B cell (primary cell): ENCODE measurements at regions of chr9 and their contacts with region 1.

Region 1: GRCh38 chr9:128067876-128068613 is at the start of gene SLC25A25:
- DNase-seq: peak; percentile 100
- ATAC-seq: peak; percentile 82
- H3K4me3 ChIP-seq: peak within 1 kb of the TSS; percentile 74 to 100 (median 98)
- H3K4me3 Mint-ChIP-seq: no peak within 1 kb of the TSS
- H3K27ac ChIP-seq: peak within 1 kb of the TSS; percentile 82 to 95
- H3K27ac Mint-ChIP-seq: peak within 1 kb of the TSS; percentile 88
- H3K4me1 ChIP-seq: peaks cover 59 to 74% of the 10 kb centered on the region in 2 donors
- H3K4me1 Mint-ChIP-seq: peaks cover 58% of the 10 kb centered on the region
- H3K27me3 ChIP-seq: no peaks in the 10 kb centered on the region
- H3K27me3 Mint-ChIP-seq: no peaks in the 10 kb centered on the region
- CTCF ChIP-seq: no peak
- total RNA-seq, gene SLC25A25: 12.1 and 12.4 TPM in 2 replicates

Region 2: DNA sequence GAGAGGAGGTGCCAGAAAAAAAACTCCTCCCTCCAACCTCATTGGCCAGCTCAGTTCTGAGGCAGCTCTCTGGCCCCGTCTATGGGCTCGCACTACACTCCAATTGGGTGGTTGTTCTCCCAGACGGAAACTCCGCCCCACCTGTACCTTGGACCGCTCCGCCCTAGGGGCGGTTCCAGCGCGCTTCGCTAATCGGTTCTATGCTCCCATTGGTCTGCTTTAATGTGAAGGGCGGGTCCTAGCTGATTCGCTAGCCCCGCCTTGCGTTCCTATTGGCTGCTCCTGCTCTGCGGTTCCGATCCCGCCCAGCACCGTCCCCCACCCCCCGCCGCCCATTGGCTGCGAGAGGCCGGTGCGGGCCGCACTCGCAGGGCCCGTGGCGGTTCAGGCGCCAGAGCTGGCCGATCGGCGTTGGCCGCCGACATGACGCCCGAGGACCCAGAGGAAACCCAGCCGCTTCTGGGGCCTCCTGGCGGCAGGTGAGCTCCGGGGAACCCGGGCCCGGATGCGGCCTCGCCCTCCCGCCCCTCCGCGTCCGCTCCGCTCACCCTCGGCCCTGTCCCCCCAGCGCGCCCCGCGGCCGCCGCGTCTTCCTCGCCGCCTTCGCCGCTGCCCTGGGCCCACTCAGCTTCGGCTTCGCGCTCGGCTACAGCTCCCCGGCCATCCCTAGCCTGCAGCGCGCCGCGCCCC is 671.1 kb before region 1 on chr9 and contains the start of gene SLC2A8:
- CTCF ChIA-PET with region 1: no interaction called
- POLR2A ChIA-PET with region 1: no interaction called
- intact Hi-C with region 1: loop called (anchors 2 kb)
- DNase-seq: peak; percentile 100
- ATAC-seq: peak; percentile 91
- H3K4me3 ChIP-seq: peak within 1 kb of the TSS; percentile 26 to 77 (median 57)
- H3K4me3 Mint-ChIP-seq: peak within 1 kb of the TSS; percentile 86
- H3K27ac ChIP-seq: peak within 1 kb of the TSS in 1 of 2 donors; percentile 74
- H3K27ac Mint-ChIP-seq: peak within 1 kb of the TSS; percentile 79
- H3K4me1 ChIP-seq: peaks cover 4 to 16% of the 10 kb centered on the region in 2 donors
- H3K4me1 Mint-ChIP-seq: peaks cover 14% of the 10 kb centered on the region
- H3K27me3 ChIP-seq: peaks cover 0 to 7% (median 2%) of the 10 kb centered on the region in 4 experiments
- H3K27me3 Mint-ChIP-seq: no peaks in the 10 kb centered on the region
- CTCF ChIP-seq: peak; percentile 34
- total RNA-seq, gene SLC2A8: 14.2 and 18.7 TPM in 2 replicates

Region 3: GRCh38 chr9:127611899-127612790 is 455.9 kb before region 1 on chr9 and contains the start of gene STXBP1:
- CTCF ChIA-PET with region 1: no interaction called
- POLR2A ChIA-PET with region 1: no interaction called
- intact Hi-C with region 1: loop called (anchors 5 kb)
- DNase-seq: peak; percentile 91
- ATAC-seq: peak; percentile 94
- H3K4me3 ChIP-seq: peak within 1 kb of the TSS; percentile 55 to 84 (median 60)
- H3K4me3 Mint-ChIP-seq: peak within 1 kb of the TSS; percentile 98
- H3K27ac ChIP-seq: no peak within 1 kb of the TSS
- H3K27ac Mint-ChIP-seq: peak within 1 kb of the TSS; percentile 80
- H3K4me1 ChIP-seq: peaks cover 28 to 31% of the 10 kb centered on the region in 2 donors
- H3K4me1 Mint-ChIP-seq: peaks cover 25% of the 10 kb centered on the region
- H3K27me3 ChIP-seq: peaks cover 0 to 39% (median 33%) of the 10 kb centered on the region in 4 experiments
- H3K27me3 Mint-ChIP-seq: peaks cover 44% of the 10 kb centered on the region
- CTCF ChIP-seq: no peak
- total RNA-seq, gene STXBP1: 0.62 and 0.78 TPM in 2 replicates

Region 4: DNA sequence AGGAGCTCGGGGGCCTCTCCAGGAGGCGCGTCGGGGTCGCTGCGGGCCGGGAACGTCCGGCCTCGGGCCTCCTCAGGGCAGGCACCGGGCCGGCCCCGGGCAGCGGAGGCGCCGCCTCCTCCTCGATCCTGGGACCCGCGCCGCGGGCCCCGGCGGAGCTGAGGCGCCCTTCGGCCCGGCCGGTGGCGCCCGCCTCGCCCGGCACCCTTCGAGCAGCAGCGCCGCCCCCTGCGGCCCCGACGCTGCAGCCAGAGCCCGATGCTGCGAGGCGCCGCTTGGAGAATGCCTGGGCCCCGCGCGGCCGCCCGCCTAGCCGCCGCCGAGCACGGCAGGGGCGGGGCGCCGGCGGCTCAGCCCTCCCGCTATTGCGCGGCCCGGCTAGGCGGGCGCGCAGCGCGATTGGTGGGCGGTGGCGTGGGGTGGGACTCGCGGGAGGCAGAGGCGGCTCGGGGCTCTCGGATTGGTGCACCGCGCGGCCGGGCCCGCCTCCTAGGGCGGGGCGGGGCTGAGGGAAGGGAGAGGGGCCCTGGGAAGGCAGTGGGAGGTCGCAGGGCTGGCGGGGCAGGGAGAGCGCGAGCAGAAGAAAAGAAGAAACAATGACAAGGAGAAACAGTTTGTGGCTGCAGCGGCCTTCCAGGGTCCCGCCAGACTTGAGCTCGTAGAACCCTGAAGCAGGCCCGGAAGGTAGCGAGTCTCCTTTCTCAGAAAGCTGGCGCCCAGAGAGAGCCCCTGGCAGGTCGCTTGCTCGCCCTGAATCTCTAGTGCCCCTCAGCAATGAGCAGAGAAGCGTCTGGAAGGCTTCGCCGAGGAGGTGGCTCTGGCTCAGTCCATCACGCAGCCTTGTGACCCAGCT is 87.1 kb before region 1 on chr9 and contains the start of gene EEIG1:
- CTCF ChIA-PET with region 1: interaction called, 5 read pairs
- POLR2A ChIA-PET with region 1: interaction called, 6 read pairs
- intact Hi-C with region 1: loop called (anchors 1 kb)
- DNase-seq: peak; percentile 97
- ATAC-seq: peak; percentile 77
- H3K4me3 ChIP-seq: peak within 1 kb of the TSS; percentile 70 to 95 (median 82)
- H3K4me3 Mint-ChIP-seq: peak within 1 kb of the TSS; percentile 97
- H3K27ac ChIP-seq: peak within 1 kb of the TSS; percentile 87 to 93
- H3K27ac Mint-ChIP-seq: peak within 1 kb of the TSS; percentile 98
- H3K4me1 ChIP-seq: peaks cover 66 to 85% of the 10 kb centered on the region in 2 donors
- H3K4me1 Mint-ChIP-seq: peaks cover 68% of the 10 kb centered on the region
- H3K27me3 ChIP-seq: no peaks in the 10 kb centered on the region
- H3K27me3 Mint-ChIP-seq: no peaks in the 10 kb centered on the region
- CTCF ChIP-seq: no peak
- total RNA-seq, gene EEIG1: 245 and 267 TPM in 2 replicates

Region 5: GRCh38 chr9:128034821-128035764 is 33.0 kb before region 1 on chr9:
- CTCF ChIA-PET with region 1: interaction called, 13 read pairs
- POLR2A ChIA-PET with region 1: interaction called, 4 read pairs
- intact Hi-C with region 1: no loop called
- DNase-seq: peak; percentile 88
- ATAC-seq: peak; percentile 82
- H3K4me3 ChIP-seq: no peak overlapping the region
- H3K4me3 Mint-ChIP-seq: no peak overlapping the region
- H3K27ac ChIP-seq: no peak overlapping the region
- H3K27ac Mint-ChIP-seq: peak overlapping the region; percentile 71
- H3K4me1 ChIP-seq: peaks cover 29 to 46% of the 10 kb centered on the region in 2 donors
- H3K4me1 Mint-ChIP-seq: peaks cover 33% of the 10 kb centered on the region
- H3K27me3 ChIP-seq: no peaks in the 10 kb centered on the region
- H3K27me3 Mint-ChIP-seq: no peaks in the 10 kb centered on the region
- CTCF ChIP-seq: peak; percentile 93

Region 6: GRCh38 chr9:128045831-128046230 is 22.2 kb before region 1 on chr9:
- CTCF ChIA-PET with region 1: no interaction called
- POLR2A ChIA-PET with region 1: no interaction called
- intact Hi-C with region 1: no loop called
- DNase-seq: no peak
- ATAC-seq: no peak
- H3K4me3 ChIP-seq: no peak overlapping the region
- H3K4me3 Mint-ChIP-seq: no peak overlapping the region
- H3K27ac ChIP-seq: no peak overlapping the region
- H3K27ac Mint-ChIP-seq: no peak overlapping the region
- H3K4me1 ChIP-seq: no peaks in the 10 kb centered on the region
- H3K4me1 Mint-ChIP-seq: no peaks in the 10 kb centered on the region
- H3K27me3 ChIP-seq: no peaks in the 10 kb centered on the region
- H3K27me3 Mint-ChIP-seq: peaks cover 3% of the 10 kb centered on the region
- CTCF ChIP-seq: no peak

Region 7: GRCh38 chr9:128094166-128094967 is 26.3 kb after region 1 on chr9:
- CTCF ChIA-PET with region 1: interaction called, 3 read pairs
- POLR2A ChIA-PET with region 1: no interaction called
- intact Hi-C with region 1: loop called (anchors 1 kb)
- DNase-seq: peak; percentile 92
- ATAC-seq: peak; percentile 93
- H3K4me3 ChIP-seq: peak overlapping the region in 1 of 5 experiments; percentile 6
- H3K4me3 Mint-ChIP-seq: peak overlapping the region; percentile 83
- H3K27ac ChIP-seq: peak overlapping the region; percentile 75 to 94
- H3K27ac Mint-ChIP-seq: peak overlapping the region; percentile 98
- H3K4me1 ChIP-seq: peaks cover 31 to 43% of the 10 kb centered on the region in 2 donors
- H3K4me1 Mint-ChIP-seq: peaks cover 43% of the 10 kb centered on the region
- H3K27me3 ChIP-seq: no peaks in the 10 kb centered on the region
- H3K27me3 Mint-ChIP-seq: no peaks in the 10 kb centered on the region
- CTCF ChIP-seq: no peak

Region 8: DNA sequence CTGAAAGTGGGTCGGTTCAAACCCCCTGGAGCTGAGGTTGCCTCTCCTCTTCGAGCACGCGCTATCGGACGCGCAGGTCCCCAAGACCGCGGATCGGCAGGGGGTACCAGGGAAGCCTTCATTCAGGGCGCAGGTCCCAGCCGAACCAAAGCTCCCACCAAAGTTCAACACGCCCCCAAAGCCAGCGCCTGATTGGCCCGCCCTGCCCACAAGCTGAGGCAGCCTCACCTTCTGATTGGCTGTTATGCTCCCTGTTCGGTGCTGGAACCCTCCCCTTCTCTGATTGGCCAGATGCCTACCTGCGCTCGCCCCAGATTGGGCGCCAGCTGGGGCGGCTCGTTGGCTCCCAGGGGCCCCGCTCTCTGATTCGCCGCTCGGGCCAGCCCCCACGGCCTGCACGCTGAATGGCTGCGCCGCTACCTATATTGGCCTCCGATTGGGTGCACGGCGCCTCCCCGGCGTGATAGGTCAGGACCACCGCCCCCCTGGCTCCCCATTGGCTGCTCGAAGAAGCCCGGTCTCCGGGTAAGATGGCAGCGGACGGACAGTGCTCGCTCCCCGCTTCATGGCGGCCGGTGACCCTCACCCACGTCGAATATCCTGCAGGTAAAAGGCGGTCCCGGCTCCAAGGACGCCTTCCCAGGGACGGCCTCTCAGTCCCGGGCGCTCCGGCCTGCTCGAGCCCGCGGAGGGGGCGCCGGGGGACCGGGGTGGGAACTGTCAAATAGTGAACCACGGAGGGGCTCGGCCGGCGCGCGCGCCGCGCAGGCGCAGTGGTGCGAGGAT is 1012.8 kb after region 1 on chr9 and contains the start of gene DOLPP1:
- CTCF ChIA-PET with region 1: no interaction called
- POLR2A ChIA-PET with region 1: no interaction called
- intact Hi-C with region 1: loop called (anchors 10 kb)
- DNase-seq: peak; percentile 99
- ATAC-seq: peak; percentile 92
- H3K4me3 ChIP-seq: peak within 1 kb of the TSS; percentile 67 to 90 (median 75)
- H3K4me3 Mint-ChIP-seq: peak within 1 kb of the TSS; percentile 91
- H3K27ac ChIP-seq: peak within 1 kb of the TSS; percentile 42 to 79
- H3K27ac Mint-ChIP-seq: peak within 1 kb of the TSS; percentile 88
- H3K4me1 ChIP-seq: peaks cover 16 to 20% of the 10 kb centered on the region in 2 donors
- H3K4me1 Mint-ChIP-seq: peaks cover 23% of the 10 kb centered on the region
- H3K27me3 ChIP-seq: no peaks in the 10 kb centered on the region
- H3K27me3 Mint-ChIP-seq: no peaks in the 10 kb centered on the region
- CTCF ChIP-seq: no peak
- total RNA-seq, gene DOLPP1: 4.7 and 7.1 TPM in 2 replicates

Region 9: GRCh38 chr9:129258124-129258822 is 1190.2 kb after region 1 on chr9:
- CTCF ChIA-PET with region 1: no interaction called
- POLR2A ChIA-PET with region 1: no interaction called
- intact Hi-C with region 1: no loop called
- DNase-seq: peak; percentile 78
- ATAC-seq: peak; percentile 82
- H3K4me3 ChIP-seq: peak overlapping the region in 3 of 5 experiments; percentile 14 to 40 (median 37)
- H3K4me3 Mint-ChIP-seq: peak overlapping the region; percentile 69
- H3K27ac ChIP-seq: no peak overlapping the region
- H3K27ac Mint-ChIP-seq: no peak overlapping the region
- H3K4me1 ChIP-seq: peaks cover 15 to 23% of the 10 kb centered on the region in 2 donors
- H3K4me1 Mint-ChIP-seq: peaks cover 17% of the 10 kb centered on the region
- H3K27me3 ChIP-seq: peaks cover 0 to 62% (median 26%) of the 10 kb centered on the region in 4 experiments
- H3K27me3 Mint-ChIP-seq: peaks cover 78% of the 10 kb centered on the region
- CTCF ChIP-seq: no peak